IMR-90 (cell line): ENCODE measurements at regions of chr19 and their contacts with region 1.

Region 1: GRCh38 chr19:35745328-35746086 is at the starts of genes PSENEN and U2AF1L4:
- DNase-seq: peak; percentile 100
- ATAC-seq: peak; percentile 71
- H3K4me3 ChIP-seq: peak within 1 kb of the TSS; percentile 56
- H3K27ac ChIP-seq: peak within 1 kb of the TSS; percentile 69
- H3K4me1 ChIP-seq: peaks cover 4% of the 10 kb centered on the region; the same call in 1 of the 2 replicates
- H3K27me3 ChIP-seq: no peaks in the 10 kb centered on the region
- CTCF ChIP-seq: 0 out of 2 replicates have a peak, but pooled peaks have one; percentile 11
- POLR2A ChIP-seq: no peak; the same call in 1 of the 2 replicates
- RAD21 ChIP-seq: no peak
- total RNA-seq, gene PSENEN: 8.6 and 9.0 TPM in 2 replicates
- total RNA-seq, gene U2AF1L4: 6.1 and 8.1 TPM in 2 replicates

Region 2: GRCh38 chr19:35702223-35703012 is 43.1 kb before region 1 on chr19:
- CTCF ChIA-PET with region 1: no interaction called
- POLR2A ChIA-PET with region 1: interaction called, 11 read pairs
- dilution Hi-C with region 1: no loop called
- in situ Hi-C with region 1: no loop called
- intact Hi-C with region 1: no loop called
- DNase-seq: peak; percentile 97
- ATAC-seq: peak; percentile 100
- H3K4me3 ChIP-seq: peak overlapping the region; percentile 49
- H3K27ac ChIP-seq: no peak overlapping the region
- H3K4me1 ChIP-seq: no peaks in the 10 kb centered on the region
- H3K27me3 ChIP-seq: no peaks in the 10 kb centered on the region
- CTCF ChIP-seq: no peak
- POLR2A ChIP-seq: no peak
- RAD21 ChIP-seq: no peak

Region 3: GRCh38 chr19:35822579-35822978 is 77.1 kb after region 1 on chr19:
- CTCF ChIA-PET with region 1: interaction called, 4 read pairs
- POLR2A ChIA-PET with region 1: no interaction called
- dilution Hi-C with region 1: no loop called
- in situ Hi-C with region 1: no loop called
- intact Hi-C with region 1: loop called (anchors 2 kb)
- DNase-seq: no peak
- ATAC-seq: no peak
- H3K4me3 ChIP-seq: no peak overlapping the region
- H3K27ac ChIP-seq: no peak overlapping the region
- H3K4me1 ChIP-seq: no peaks in the 10 kb centered on the region
- H3K27me3 ChIP-seq: peaks cover 6% of the 10 kb centered on the region; the same call in 1 of the 2 replicates
- CTCF ChIP-seq: no peak
- POLR2A ChIP-seq: no peak
- RAD21 ChIP-seq: no peak